ENCODE measurements at regions of chr11 and their contacts with region 1.

Region 1: GRCh38 chr11:59944720-59945119 is 6.5 kb downstream of the OOSP1 start:
- DNase-seq: no peak
- H3K4me3 ChIP-seq: no peak overlapping the region
- H3K27ac ChIP-seq: no peak overlapping the region
- H3K4me1 ChIP-seq: no peaks in the 10 kb centered on the region
- H3K27me3 ChIP-seq: peaks cover 28% of the 10 kb centered on the region; the same call in 1 of the 2 replicates
- CTCF ChIP-seq: no peak

Region 2: GRCh38 chr11:59931688-59932087 is 13.0 kb before region 1 on chr11:
- CTCF ChIA-PET with region 1: interaction called, 10 read pairs
- POLR2A ChIA-PET with region 1: no interaction called
- intact Hi-C with region 1: no loop called
- DNase-seq: no peak
- H3K4me3 ChIP-seq: no peak overlapping the region
- H3K27ac ChIP-seq: no peak overlapping the region
- H3K4me1 ChIP-seq: no peaks in the 10 kb centered on the region
- H3K27me3 ChIP-seq: peaks cover 30% of the 10 kb centered on the region
- CTCF ChIP-seq: no peak

Region 3: GRCh38 chr11:59957094-59957493 is 12.4 kb after region 1 on chr11:
- CTCF ChIA-PET with region 1: no interaction called
- POLR2A ChIA-PET with region 1: no interaction called
- intact Hi-C with region 1: no loop called
- DNase-seq: no peak
- H3K4me3 ChIP-seq: no peak overlapping the region
- H3K27ac ChIP-seq: no peak overlapping the region
- H3K4me1 ChIP-seq: no peaks in the 10 kb centered on the region
- H3K27me3 ChIP-seq: no peaks in the 10 kb centered on the region
- CTCF ChIP-seq: no peak

Region 4: DNA sequence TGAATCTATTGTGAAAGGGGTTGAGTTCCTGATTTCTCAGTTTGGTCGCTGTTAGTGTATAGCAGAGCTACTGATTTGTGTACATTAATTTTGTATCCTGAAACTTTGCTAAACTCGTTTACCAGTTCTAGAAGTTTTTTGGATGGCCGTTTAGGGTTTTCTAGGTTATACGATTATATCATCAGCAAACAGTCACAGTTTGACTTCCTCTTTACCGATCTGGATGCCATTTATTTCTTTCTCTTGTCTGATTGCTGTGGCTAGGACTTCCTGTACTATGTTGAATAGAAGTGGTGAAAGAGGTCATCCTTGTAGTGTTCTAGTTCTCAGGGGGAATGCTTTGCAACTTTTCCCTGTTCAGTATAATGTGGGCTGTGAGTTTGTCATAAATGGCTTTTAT is 47.7 kb after region 1 on chr11:
- CTCF ChIA-PET with region 1: no interaction called
- POLR2A ChIA-PET with region 1: no interaction called
- intact Hi-C with region 1: no loop called
- DNase-seq: no peak
- H3K4me3 ChIP-seq: no peak overlapping the region
- H3K27ac ChIP-seq: no peak overlapping the region
- H3K4me1 ChIP-seq: no peaks in the 10 kb centered on the region
- H3K27me3 ChIP-seq: no peaks in the 10 kb centered on the region
- CTCF ChIP-seq: no peak